ENCODE measurements at regions of chr13 and their contacts with region 1.

Region 1: GRCh38 chr13:80276371-80277289 is 64.3 kb downstream of the SPRY2 start:
- DNase-seq: no peak
- H3K4me3 ChIP-seq: no peak overlapping the region
- H3K27ac ChIP-seq: peak overlapping the region in 1 of 2 donors; percentile 12
- H3K4me1 ChIP-seq: no peaks in the 10 kb centered on the region
- H3K27me3 ChIP-seq: no peaks in the 10 kb centered on the region
- CTCF ChIP-seq: no peak
- POLR2A ChIP-seq: no peak

Region 2: DNA sequence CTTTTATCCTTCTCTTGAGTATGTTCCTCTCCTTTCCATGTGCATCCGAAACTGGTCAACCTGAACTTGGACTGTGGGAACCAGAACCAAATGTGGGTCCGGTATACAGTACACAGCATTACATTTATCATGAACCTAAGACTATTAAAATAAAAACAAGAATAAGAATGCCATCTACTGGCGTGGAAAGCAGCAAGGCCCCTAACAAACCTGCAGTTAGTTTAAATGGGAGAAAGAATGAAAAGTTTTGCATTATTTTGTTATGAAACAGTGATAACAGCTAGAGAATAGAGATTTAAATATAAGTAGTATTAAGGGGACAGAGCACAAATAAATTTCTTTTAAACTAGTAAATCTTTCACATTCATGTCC is 1030.1 kb before region 1 on chr13:
- intact Hi-C with region 1: loop called (anchors 5 kb)
- DNase-seq: no peak
- H3K4me3 ChIP-seq: no peak overlapping the region
- H3K27ac ChIP-seq: no peak overlapping the region
- H3K4me1 ChIP-seq: no peaks in the 10 kb centered on the region
- H3K27me3 ChIP-seq: no peaks in the 10 kb centered on the region
- CTCF ChIP-seq: no peak
- POLR2A ChIP-seq: no peak

Region 3: DNA sequence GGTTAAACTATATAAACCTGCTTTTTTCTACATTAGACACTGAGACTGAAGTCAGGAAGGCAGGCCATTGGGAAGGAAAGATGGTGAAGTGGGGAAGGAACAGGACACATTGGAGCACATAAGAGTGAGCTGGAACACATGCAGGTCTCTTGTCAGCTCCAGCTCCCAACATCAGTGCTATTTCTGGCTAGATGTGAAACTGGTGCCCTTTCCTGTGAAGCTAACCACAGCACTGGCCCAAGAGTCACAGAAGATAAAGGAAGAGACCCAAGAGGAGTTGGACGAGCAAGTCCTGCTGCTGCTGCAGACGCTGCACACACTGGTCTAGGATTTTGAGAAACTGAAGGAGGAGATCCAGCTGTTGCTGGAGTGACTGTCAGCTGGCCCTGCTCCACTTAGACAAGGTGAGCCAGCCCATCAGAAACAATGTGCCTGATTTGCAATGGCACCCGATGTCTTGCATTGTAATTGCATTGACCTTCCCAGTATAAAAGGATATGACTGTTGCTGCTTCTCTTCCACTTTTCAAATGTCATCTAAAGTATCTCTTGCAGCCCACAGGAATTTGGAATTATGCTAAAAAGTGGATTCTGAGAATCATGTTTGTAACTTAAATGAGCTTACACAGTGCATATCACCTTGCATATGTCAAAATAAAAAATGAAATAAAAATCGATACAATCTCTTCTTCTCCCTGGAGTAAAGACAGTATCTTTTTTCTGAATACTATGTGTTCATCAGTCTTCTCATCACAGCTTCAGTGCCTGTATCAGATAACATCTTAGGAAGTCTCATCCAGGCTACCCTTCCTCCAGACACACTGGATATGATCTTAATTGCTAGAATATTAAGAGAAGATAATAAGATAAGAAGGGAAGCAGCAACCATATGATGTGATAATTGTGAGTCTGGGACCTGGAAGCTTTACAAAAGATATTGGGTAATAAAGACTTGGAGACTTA is 295.0 kb after region 1 on chr13:
- intact Hi-C with region 1: no loop called
- DNase-seq: no peak
- H3K4me3 ChIP-seq: no peak overlapping the region
- H3K27ac ChIP-seq: no peak overlapping the region
- H3K4me1 ChIP-seq: no peaks in the 10 kb centered on the region
- H3K27me3 ChIP-seq: no peaks in the 10 kb centered on the region
- CTCF ChIP-seq: no peak
- POLR2A ChIP-seq: no peak

Region 4: DNA sequence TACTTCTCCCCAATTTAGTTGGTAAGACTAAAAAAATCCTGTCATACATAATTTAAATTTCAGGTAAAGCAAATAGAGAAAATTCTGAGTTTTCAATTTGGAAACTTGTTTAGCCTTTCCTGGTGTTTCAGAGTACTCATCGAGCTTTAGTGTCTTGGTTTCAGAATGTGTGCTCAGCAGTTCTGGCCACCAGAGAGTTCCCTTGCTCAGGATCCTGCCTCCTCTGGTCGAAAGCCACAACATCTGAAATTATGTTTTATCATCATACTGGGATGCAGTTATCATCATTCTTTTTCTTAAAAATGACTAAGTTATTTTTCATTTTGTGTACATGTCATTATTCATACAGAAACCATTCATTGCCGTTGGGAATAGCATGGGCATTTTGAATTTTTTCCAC is 327.5 kb after region 1 on chr13:
- intact Hi-C with region 1: no loop called
- DNase-seq: no peak
- H3K4me3 ChIP-seq: no peak overlapping the region
- H3K27ac ChIP-seq: peak overlapping the region in 1 of 2 donors; percentile 68
- H3K4me1 ChIP-seq: no peaks in the 10 kb centered on the region
- H3K27me3 ChIP-seq: no peaks in the 10 kb centered on the region
- CTCF ChIP-seq: no peak
- POLR2A ChIP-seq: no peak

Region 5: DNA sequence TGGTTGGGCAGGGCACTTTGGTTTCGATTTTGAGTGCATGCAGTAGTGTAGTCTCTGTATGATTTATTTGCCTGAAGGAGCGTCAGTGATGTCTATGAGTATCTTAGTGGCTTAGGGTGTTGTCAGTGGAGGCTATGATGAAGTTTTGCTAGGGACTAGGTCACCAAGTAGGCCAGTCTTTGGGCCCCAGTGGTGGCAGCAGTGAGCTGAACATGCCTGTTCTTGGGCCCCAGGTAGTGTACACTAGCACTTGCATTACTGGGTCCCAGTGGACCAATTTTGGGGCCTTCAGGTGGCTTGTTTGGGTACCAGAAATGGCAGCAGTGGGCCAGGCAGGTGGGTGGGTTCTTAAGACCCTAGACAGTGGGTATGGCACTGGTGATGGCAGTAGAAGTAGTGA is 663.0 kb after region 1 on chr13:
- intact Hi-C with region 1: no loop called
- DNase-seq: no peak
- H3K4me3 ChIP-seq: no peak overlapping the region
- H3K27ac ChIP-seq: no peak overlapping the region
- H3K4me1 ChIP-seq: no peaks in the 10 kb centered on the region
- H3K27me3 ChIP-seq: no peaks in the 10 kb centered on the region
- CTCF ChIP-seq: no peak
- POLR2A ChIP-seq: no peak

Region 6: GRCh38 chr13:81031996-81032395 is 755.4 kb after region 1 on chr13:
- intact Hi-C with region 1: no loop called
- DNase-seq: no peak
- H3K4me3 ChIP-seq: no peak overlapping the region
- H3K27ac ChIP-seq: no peak overlapping the region
- H3K4me1 ChIP-seq: no peaks in the 10 kb centered on the region
- H3K27me3 ChIP-seq: no peaks in the 10 kb centered on the region
- CTCF ChIP-seq: no peak
- POLR2A ChIP-seq: no peak